HAP-1 (cell line): ENCODE measurements at regions of chr7 and their contacts with region 1.

Region 1: DNA sequence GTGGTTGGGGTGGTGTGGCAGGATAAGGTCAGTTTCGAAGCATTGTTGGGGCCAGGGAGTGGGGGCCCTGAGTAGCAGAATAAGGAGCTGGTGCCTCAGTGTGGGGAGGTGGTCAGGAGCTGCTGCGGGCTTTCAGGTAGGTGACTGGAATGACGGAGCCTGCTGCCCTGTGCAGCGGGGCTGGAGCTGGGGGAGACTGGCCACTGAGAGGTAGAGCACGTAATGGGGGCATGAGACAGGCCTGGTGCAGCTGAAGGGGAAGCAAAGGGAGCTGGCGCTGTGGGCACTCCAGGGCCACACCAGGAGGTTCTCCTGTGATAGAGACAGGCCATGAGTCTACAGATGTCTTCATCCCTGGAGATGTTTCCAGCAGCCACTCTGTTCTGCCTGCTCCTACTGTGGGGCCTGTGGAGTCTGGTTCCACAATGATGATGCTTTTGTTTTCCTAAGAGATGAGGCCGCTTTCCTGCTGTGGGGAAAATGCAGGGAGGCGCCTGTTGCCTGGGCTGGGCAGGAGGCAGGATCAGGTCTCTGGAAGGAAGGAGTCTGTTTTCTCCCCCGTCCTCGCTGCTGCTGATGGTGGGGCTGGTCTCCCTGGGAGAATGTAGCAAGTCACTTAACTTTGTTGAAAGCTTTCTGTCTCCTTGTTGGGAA is 31.1 kb downstream of the NUB1 start:
- DNase-seq: no peak
- H3K4me3 ChIP-seq: no peak overlapping the region
- H3K4me1 ChIP-seq: no peaks in the 10 kb centered on the region
- H3K27me3 ChIP-seq: no peaks in the 10 kb centered on the region

Region 2: DNA sequence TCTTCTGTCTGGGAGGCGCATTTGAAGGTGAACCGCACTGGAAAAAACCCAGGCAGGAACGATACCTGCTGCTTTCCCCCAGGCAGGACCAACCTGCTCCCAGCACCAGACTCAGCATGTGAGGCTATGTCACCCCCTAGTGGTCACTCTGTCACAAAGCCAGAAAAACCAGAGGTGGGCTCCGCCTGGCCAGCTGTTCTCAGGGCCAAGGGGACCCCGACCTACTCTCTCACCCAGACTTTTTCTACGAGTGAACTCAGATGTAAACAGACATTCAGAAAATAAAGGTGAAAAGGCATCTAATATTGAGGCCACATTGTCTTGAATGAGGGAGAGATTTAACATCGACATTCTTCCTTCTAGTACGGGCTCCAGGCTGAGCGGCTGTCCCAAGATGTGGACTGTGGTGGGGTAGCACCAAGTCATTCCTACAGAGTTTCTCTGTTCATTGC is 386.9 kb after region 1 on chr7:
- in situ Hi-C with region 1: loop called (anchors 10 kb)
- DNase-seq: peak; percentile 51 to 77
- H3K4me3 ChIP-seq: no peak overlapping the region
- H3K4me1 ChIP-seq: no peaks in the 10 kb centered on the region
- H3K27me3 ChIP-seq: no peaks in the 10 kb centered on the region